ENCODE measurements at regions of chr7 and their contacts with region 1.

Region 1: DNA sequence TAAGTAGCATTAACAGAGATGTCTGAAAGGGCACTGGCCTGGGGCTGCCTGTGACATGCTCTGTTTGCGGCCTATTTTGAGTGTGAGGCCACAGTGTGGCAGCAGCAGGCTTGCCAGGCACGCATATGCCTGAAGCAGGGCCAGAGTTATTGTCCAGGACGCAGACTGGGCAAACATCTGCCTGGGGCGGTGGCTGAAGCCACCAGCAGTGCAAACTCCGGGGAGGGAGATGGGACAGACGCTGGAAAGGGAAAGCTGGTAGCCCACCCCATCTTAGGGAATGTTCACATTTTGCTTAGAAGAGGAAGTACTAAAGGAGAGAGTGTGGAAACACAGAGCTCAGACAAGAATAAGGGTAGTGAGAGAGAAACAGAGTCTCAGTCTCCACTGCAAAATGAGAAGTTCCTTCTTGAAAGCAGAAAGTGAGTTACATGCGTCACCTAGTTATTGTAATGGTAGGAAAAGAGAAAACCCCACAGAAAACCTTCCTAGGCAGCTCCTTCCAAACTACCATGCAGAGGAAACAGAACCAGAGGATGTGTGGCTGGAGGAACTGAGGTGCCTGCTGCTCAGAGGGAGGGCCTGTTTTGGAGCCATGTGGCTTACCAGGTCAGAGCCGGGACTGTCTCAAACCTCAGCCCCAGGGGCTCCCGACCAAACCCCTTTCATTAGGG is 14.6 kb downstream of the AKR1B1 start:
- DNase-seq: peak; percentile 74
- ATAC-seq: peak; percentile 81
- H3K4me3 ChIP-seq: no peak overlapping the region
- H3K27ac ChIP-seq: 0 out of 2 replicates have a peak overlapping the region, but pooled peaks have one; percentile 2
- H3K4me1 ChIP-seq: peaks cover 37% of the 10 kb centered on the region
- H3K27me3 ChIP-seq: no peaks in the 10 kb centered on the region
- CTCF ChIP-seq: peak; percentile 76

Region 2: GRCh38 chr7:134403677-134404076 is 40.7 kb before region 1 on chr7:
- CTCF ChIA-PET with region 1: no interaction called
- POLR2A ChIA-PET with region 1: no interaction called
- intact Hi-C with region 1: no loop called
- DNase-seq: no peak
- ATAC-seq: no peak
- H3K4me3 ChIP-seq: no peak overlapping the region
- H3K27ac ChIP-seq: no peak overlapping the region
- H3K4me1 ChIP-seq: no peaks in the 10 kb centered on the region
- H3K27me3 ChIP-seq: no peaks in the 10 kb centered on the region
- CTCF ChIP-seq: no peak

Region 3: DNA sequence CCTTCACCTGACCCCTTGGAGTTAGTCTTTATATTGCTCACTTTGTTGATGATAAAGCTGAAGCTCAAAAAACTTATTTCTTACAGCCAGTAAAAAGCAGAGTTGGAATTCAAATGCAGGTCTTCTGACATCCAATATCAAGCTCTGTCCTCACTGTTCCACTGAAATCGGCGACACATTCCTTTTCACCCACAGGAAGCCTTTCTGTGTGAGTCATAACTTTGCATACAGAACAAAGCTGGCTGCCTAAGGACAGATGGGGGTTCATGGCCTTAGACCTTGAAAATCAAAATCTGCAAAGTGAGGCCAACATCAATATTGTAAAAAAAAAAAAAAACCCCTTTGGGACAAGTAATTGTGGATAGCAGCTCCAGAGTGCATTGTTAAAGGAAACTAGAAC is 36.4 kb after region 1 on chr7:
- CTCF ChIA-PET with region 1: interaction called, 4 read pairs
- POLR2A ChIA-PET with region 1: no interaction called
- intact Hi-C with region 1: loop called (anchors 1 kb)
- DNase-seq: peak; percentile 78
- ATAC-seq: peak; percentile 97
- H3K4me3 ChIP-seq: no peak overlapping the region
- H3K27ac ChIP-seq: no peak overlapping the region
- H3K4me1 ChIP-seq: peaks cover 16% of the 10 kb centered on the region
- H3K27me3 ChIP-seq: no peaks in the 10 kb centered on the region
- CTCF ChIP-seq: no peak

Region 4: GRCh38 chr7:134567391-134567790 is 123.1 kb after region 1 on chr7:
- CTCF ChIA-PET with region 1: no interaction called
- POLR2A ChIA-PET with region 1: no interaction called
- intact Hi-C with region 1: no loop called
- DNase-seq: no peak
- ATAC-seq: no peak
- H3K4me3 ChIP-seq: no peak overlapping the region
- H3K27ac ChIP-seq: no peak overlapping the region
- H3K4me1 ChIP-seq: peaks cover 37% of the 10 kb centered on the region
- H3K27me3 ChIP-seq: no peaks in the 10 kb centered on the region
- CTCF ChIP-seq: no peak